ENCODE measurements at regions of chr11 and their contacts with region 1.

Region 1: DNA sequence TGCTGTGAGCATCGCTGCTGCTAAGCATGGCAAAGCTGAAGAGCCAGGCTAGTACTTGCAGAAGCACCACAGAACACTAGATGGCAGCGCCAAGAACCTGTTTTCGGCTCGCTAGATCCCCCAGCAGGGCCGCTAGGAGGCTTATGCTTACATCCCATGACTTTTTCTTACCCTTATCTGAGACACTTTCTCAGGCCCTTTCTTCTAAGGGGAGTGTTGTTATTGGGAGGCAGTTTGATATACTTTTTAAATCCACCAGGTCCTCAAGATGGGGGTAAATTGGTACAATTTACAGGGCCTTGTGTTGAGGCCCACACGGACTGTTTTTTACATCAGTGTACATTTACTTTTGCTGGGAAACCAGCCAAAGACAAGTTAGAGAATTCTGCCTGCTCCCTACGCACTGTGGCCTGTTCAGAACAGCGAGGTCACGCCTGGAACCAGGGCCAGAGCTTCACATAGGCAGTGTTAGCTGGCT is 4.0 kb downstream of the TRIM6 start:
- DNase-seq: peak; percentile 84 to 86
- ATAC-seq: peak; percentile 89
- H3K4me3 ChIP-seq: no peak overlapping the region
- H3K27ac ChIP-seq: peak overlapping the region; percentile 16 to 43
- H3K4me1 ChIP-seq: no peaks in the 10 kb centered on the region
- H3K27me3 ChIP-seq: no peaks in the 10 kb centered on the region

Region 2: GRCh38 chr11:5671841-5672240 is 71.4 kb after region 1 on chr11:
- intact Hi-C with region 1: no loop called
- DNase-seq: no peak
- ATAC-seq: no peak
- H3K4me3 ChIP-seq: no peak overlapping the region
- H3K27ac ChIP-seq: no peak overlapping the region
- H3K4me1 ChIP-seq: no peaks in the 10 kb centered on the region
- H3K27me3 ChIP-seq: no peaks in the 10 kb centered on the region

Region 3: DNA sequence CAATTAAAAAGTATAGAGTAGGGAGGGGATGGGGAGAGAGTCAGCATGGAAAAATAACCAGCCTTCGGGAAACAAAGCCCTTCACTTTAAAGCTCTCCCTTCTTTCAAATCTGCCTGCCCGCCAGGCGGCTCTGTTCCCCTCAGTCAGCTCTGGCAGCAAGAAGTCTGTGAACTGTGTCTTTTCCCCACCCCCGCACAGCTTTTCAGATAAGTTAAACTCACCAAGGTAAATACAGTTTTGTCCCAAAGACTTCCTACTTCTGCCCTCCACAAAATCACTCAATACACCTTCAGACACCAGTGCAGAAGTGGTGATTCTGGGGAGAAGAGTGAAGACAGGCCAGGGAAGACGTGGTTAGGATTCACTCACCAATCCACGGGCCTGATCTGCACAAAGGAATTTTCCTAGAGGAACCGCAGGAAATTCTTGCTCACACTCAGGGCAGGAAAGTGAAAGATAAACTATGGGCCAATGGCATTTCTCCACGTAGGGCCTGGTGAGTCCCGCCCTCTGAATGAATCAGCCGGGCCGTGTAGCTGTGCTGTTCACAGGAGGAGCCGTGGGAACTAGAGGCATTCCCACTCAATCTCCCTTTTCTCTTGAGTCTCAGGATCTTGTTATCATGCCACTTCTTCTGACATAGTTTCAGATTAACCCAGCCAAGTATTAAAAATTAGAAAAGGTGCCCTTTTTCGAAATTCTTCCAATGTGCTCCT is 84.4 kb after region 1 on chr11 and contains the start of gene TRIM5:
- intact Hi-C with region 1: loop called (anchors 2 to 5 kb)
- DNase-seq: peak; percentile 90 to 92
- ATAC-seq: peak; percentile 97
- H3K4me3 ChIP-seq: peak within 1 kb of the TSS; percentile 81 to 88
- H3K27ac ChIP-seq: peak within 1 kb of the TSS; percentile 97 to 98
- H3K4me1 ChIP-seq: no peaks in the 10 kb centered on the region
- H3K27me3 ChIP-seq: no peaks in the 10 kb centered on the region
- total RNA-seq, gene TRIM5: 38.8 to 42.0 TPM

Region 4: GRCh38 chr11:5690216-5690615 is 89.8 kb after region 1 on chr11:
- intact Hi-C with region 1: loop called (anchors 2 to 5 kb)
- DNase-seq: no peak
- ATAC-seq: peak; percentile 80
- H3K4me3 ChIP-seq: peak overlapping the region; percentile 84
- H3K27ac ChIP-seq: peak overlapping the region; percentile 94 to 98
- H3K4me1 ChIP-seq: peaks cover 0 to 4% of the 10 kb centered on the region in 2 donors
- H3K27me3 ChIP-seq: no peaks in the 10 kb centered on the region

Region 5: GRCh38 chr11:5737091-5737490 is 136.7 kb after region 1 on chr11:
- intact Hi-C with region 1: no loop called
- DNase-seq: no peak
- ATAC-seq: no peak
- H3K4me3 ChIP-seq: no peak overlapping the region
- H3K27ac ChIP-seq: no peak overlapping the region
- H3K4me1 ChIP-seq: no peaks in the 10 kb centered on the region
- H3K27me3 ChIP-seq: no peaks in the 10 kb centered on the region

Region 6: DNA sequence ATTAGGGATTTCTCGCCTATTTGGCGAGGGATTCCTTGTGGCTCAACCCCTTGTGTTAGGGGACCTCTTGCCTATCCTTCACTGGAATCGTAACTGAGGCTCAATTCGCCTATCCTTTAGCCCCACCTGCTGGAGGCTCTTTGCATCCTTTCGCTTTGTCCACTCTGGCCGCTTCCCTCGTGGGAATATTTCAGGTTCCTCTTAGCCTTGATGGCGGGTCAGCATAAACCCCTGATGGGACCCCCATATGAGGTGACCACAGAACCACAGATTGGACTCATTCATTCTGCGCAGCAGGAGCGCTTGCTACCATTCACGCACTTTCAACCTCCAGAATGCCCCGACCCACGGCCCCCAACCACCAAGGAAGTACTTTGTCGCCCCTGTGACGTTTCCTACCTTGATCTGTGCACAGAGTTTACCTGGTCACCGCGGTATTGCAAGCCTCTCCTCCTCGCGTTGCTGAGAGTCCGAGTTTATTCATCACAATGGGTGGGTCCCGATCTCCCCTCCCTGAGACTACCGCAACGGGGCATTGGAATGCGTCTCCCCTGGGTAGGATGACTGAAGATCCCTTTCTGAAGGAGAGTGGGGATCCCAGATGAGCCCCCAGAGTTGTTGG is 208.2 kb after region 1 on chr11 and contains the start of gene OR52N2:
- intact Hi-C with region 1: loop called in 1 of 2 experiments (anchors 5 kb)
- DNase-seq: peak; percentile 79 to 80
- ATAC-seq: peak; percentile 93
- H3K4me3 ChIP-seq: peak within 1 kb of the TSS in 1 of 2 donors; percentile 18
- H3K27ac ChIP-seq: no peak within 1 kb of the TSS
- H3K4me1 ChIP-seq: no peaks in the 10 kb centered on the region
- H3K27me3 ChIP-seq: no peaks in the 10 kb centered on the region
- total RNA-seq, gene OR52N2: not detected

Measured in aorta (tissue), 5 donors.